ENCODE measurements at regions of chr3 and their contacts with region 1.

Region 1: GRCh38 chr3:98522244-98523090 is at the start of gene CLDND1:
- DNase-seq: peak; percentile 96
- H3K4me3 Mint-ChIP-seq: peak within 1 kb of the TSS; percentile 89
- H3K27ac Mint-ChIP-seq: peak within 1 kb of the TSS; percentile 93
- H3K4me1 Mint-ChIP-seq: peaks cover 43% of the 10 kb centered on the region
- H3K27me3 Mint-ChIP-seq: no peaks in the 10 kb centered on the region
- total RNA-seq, gene CLDND1: 91.7 to 94.6 TPM

Region 2: GRCh38 chr3:97971677-97972567 is 550.5 kb before region 1 on chr3 and contains the start of gene RIOX2:
- CTCF ChIA-PET with region 1: no interaction called
- intact Hi-C with region 1: loop called (anchors 5 kb)
- DNase-seq: peak; percentile 84
- H3K4me3 Mint-ChIP-seq: peak within 1 kb of the TSS; percentile 87
- H3K27ac Mint-ChIP-seq: peak within 1 kb of the TSS; percentile 89
- H3K4me1 Mint-ChIP-seq: peaks cover 51% of the 10 kb centered on the region
- H3K27me3 Mint-ChIP-seq: no peaks in the 10 kb centered on the region
- total RNA-seq, gene RIOX2: 26.3 to 32.6 TPM

Region 3: GRCh38 chr3:98556164-98557130 is 34.0 kb after region 1 on chr3:
- CTCF ChIA-PET with region 1: interaction called, 8 read pairs
- intact Hi-C with region 1: loop called (anchors 1 kb)
- DNase-seq: peak; percentile 87
- H3K4me3 Mint-ChIP-seq: peak overlapping the region; percentile 30
- H3K27ac Mint-ChIP-seq: peak overlapping the region; percentile 83
- H3K4me1 Mint-ChIP-seq: peaks cover 76% of the 10 kb centered on the region
- H3K27me3 Mint-ChIP-seq: peaks cover 5% of the 10 kb centered on the region

Region 4: DNA sequence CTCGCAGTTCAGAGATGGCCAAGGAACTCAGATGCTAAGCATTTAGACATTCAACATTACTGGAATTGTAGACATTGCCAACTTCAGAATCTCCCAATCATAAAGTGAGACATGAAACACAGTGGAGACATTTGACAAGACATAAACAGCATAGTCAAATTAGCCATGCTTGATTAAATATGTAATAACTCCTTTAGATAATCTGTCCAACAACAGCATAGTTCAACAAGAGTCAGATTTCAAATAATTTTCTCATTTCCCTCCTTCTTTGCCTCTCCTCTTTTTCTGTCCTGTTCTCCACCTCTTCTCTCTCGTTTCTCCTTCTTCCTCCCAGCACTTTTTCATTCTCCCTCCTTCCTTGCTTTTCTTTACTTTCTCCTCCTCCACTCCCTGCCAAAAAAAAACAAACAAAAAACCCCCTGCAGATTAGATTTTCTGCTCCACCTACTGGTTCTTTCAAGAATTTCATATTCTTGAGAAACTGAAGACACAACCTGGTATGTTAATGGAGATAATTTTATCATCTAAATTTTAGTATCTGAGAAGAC is 50.8 kb after region 1 on chr3:
- CTCF ChIA-PET with region 1: interaction called, 5 read pairs
- intact Hi-C with region 1: loop called (anchors 1 kb)
- DNase-seq: no peak
- H3K4me3 Mint-ChIP-seq: no peak overlapping the region
- H3K27ac Mint-ChIP-seq: peak overlapping the region; percentile 47
- H3K4me1 Mint-ChIP-seq: peaks cover 19% of the 10 kb centered on the region
- H3K27me3 Mint-ChIP-seq: no peaks in the 10 kb centered on the region

Region 5: DNA sequence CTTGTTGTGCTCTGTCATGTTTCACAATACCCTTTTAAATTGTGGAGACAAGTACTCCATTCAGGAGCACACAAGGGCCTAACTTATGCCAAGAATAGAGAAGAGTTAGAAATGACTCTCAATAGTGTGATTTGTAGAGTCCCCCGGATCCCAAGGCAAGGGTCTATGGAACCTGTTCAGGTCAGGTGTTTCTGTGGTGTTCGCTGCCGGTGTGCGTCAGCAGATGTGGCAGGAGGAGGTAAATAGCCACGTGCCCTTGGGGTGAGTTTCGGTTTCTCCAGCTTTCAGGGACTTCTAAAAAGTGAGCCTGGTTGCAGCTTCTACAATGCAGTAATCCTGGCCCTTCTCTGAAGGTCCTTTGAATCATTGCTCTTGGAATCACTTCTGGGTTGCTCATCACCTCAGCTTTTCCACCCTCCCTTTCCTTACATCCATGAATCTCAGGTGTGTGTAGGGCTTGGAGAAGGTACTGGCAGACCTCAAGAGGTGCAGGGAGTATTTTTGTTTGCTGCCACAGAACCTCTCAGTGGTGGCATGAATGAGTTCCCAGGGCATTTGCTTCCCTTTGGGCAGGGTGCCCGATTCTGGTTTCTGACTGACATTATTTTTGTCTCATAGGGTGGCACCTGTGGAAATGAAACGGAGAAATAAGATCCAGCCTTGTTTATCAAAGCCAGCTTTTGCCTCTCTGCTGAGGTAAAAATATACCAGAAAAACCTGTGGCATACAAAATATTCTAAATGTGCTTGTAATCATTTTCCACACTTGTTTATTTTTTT is 248.0 kb after region 1 on chr3:
- CTCF ChIA-PET with region 1: no interaction called
- intact Hi-C with region 1: no loop called
- DNase-seq: peak; percentile 14
- H3K4me3 Mint-ChIP-seq: no peak overlapping the region
- H3K27ac Mint-ChIP-seq: no peak overlapping the region
- H3K4me1 Mint-ChIP-seq: peaks cover 3% of the 10 kb centered on the region
- H3K27me3 Mint-ChIP-seq: peaks cover 12% of the 10 kb centered on the region

Region 6: GRCh38 chr3:99817437-99818240 is 1295.2 kb after region 1 on chr3 and contains the start of gene CMSS1:
- CTCF ChIA-PET with region 1: no interaction called
- intact Hi-C with region 1: loop called (anchors 2 kb)
- DNase-seq: peak; percentile 95
- H3K4me3 Mint-ChIP-seq: peak within 1 kb of the TSS; percentile 98
- H3K27ac Mint-ChIP-seq: peak within 1 kb of the TSS; percentile 98
- H3K4me1 Mint-ChIP-seq: peaks cover 39% of the 10 kb centered on the region
- H3K27me3 Mint-ChIP-seq: no peaks in the 10 kb centered on the region
- total RNA-seq, gene CMSS1: 95.8 to 106 TPM